Naive thymus-derived CD4-positive, alpha-beta T cell (primary cell): ENCODE measurements at regions of chr3 and their contacts with region 1.

Region 1: DNA sequence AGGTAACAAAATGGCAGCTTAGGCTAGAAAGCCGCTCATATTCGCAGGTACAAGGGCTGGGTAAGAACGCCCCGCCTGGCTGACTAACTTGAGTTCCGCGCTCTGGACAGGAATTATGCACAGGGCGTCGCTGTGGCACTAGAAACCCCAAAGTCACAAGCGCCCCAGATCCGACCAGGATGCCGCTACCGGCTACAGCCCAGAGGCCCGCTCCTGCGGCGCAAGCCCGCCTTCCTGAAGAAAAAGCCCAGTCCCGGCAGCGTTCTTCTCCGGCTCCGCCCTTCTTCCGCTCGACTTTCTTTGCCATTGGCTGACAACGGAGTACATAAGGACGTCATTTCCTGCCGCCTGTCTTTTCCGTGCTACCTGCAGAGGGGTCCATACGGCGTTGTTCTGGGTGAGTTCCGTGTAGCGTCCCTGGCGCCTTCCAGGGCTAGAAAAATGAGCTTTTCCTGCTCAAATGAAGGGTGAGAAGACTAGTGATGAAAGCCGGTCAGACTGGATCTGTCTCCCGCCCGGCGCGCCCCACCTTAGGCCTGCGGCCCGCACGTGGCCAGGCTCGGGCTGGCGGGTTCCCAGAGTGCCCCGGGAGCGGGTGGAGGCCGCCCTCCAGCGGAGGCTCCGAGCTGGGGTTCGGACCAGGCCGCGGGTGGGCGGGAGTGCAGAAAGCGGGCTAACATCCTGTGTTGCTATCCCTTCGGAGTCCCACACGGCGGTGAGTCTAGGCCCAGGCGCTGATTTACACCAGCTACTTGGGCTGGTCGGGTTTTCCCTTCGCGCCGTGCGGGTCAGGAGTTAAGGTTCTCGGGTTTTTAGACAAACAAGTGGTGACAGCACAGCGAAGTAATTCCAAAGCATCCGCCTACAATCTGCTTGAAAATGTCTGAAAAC is at the start of gene RPSA:
- DNase-seq: peak; percentile 80 to 99 (median 98)
- ATAC-seq: peak; percentile 96
- H3K4me3 ChIP-seq: peak within 1 kb of the TSS; percentile 62
- H3K4me3 Mint-ChIP-seq: peak within 1 kb of the TSS; percentile 88 to 97 (median 94)
- H3K27ac ChIP-seq: peak within 1 kb of the TSS; percentile 86
- H3K27ac Mint-ChIP-seq: peak within 1 kb of the TSS; percentile 88 to 98 (median 96)
- H3K4me1 ChIP-seq: peaks cover 30 to 37% of the 10 kb centered on the region in 2 donors
- H3K4me1 Mint-ChIP-seq: peaks cover 28 to 55% (median 51%) of the 10 kb centered on the region in 7 donors
- H3K27me3 ChIP-seq: no peaks in the 10 kb centered on the region
- H3K27me3 Mint-ChIP-seq: peaks cover 0 to 2% (median 0%) of the 10 kb centered on the region in 5 donors
- total RNA-seq, gene RPSA: 1,411 to 1,898 (median 1,693) TPM

Region 2: GRCh38 chr3:39086144-39086543 is 320.5 kb before region 1 on chr3:
- CTCF ChIA-PET with region 1: no interaction called
- POLR2A ChIA-PET with region 1: interaction called, 13 read pairs
- intact Hi-C with region 1: no loop called
- DNase-seq: no peak
- ATAC-seq: peak; percentile 37
- H3K4me3 ChIP-seq: no peak overlapping the region
- H3K4me3 Mint-ChIP-seq: no peak overlapping the region
- H3K27ac ChIP-seq: no peak overlapping the region
- H3K27ac Mint-ChIP-seq: peak overlapping the region in 3 of 9 donors; percentile 16 to 21 (median 21)
- H3K4me1 ChIP-seq: no peaks in the 10 kb centered on the region
- H3K4me1 Mint-ChIP-seq: peaks cover 0 to 7% (median 0%) of the 10 kb centered on the region in 7 donors
- H3K27me3 ChIP-seq: no peaks in the 10 kb centered on the region
- H3K27me3 Mint-ChIP-seq: no peaks in the 10 kb centered on the region

Region 3: DNA sequence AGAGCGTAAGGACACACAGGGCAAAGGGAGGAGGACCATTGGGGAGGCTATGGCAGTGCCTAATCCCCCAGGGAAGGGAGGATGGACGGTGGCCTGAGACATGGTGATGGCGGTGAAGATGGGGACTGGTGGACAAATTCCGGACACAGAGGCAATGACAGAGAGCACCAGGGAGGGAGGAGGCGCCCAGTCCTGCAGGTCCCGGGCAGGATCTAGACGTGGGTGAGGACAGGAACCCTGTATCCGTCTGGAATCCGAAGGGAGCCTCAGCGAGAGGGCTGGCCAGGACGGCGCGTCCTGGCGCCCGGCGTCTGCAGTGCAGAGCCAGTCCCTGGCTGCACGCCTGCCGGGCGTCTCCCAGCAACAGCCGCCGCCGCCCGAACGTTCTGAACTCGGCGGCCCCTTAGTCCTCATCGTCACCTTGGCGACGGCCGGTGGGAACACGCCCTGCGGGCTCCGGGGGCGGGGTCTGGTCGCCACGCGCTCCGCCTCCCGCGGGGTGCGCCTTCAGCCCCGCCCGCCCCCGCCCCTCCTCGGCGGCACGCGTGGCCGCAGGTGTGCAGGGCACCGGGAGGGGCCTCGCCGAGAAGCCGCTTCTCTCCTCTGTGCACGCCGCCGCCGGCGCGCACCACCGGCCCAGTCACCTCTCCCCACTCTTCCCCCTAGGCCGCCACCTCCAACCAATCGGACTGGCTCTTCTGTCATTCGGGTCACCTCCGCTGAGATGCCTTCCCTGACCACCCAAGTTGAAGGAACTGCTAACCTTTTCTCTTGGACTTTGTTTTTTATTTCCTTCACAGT is 225.9 kb before region 1 on chr3:
- CTCF ChIA-PET with region 1: no interaction called
- POLR2A ChIA-PET with region 1: no interaction called
- intact Hi-C with region 1: loop called in 1 of 2 experiments (anchors 1 kb)
- DNase-seq: peak; percentile 80 to 86 (median 83)
- ATAC-seq: peak; percentile 94
- H3K4me3 ChIP-seq: peak overlapping the region; percentile 74
- H3K4me3 Mint-ChIP-seq: peak overlapping the region; percentile 79 to 94 (median 87)
- H3K27ac ChIP-seq: peak overlapping the region; percentile 68
- H3K27ac Mint-ChIP-seq: peak overlapping the region; percentile 71 to 94 (median 88)
- H3K4me1 ChIP-seq: peaks cover 23 to 33% of the 10 kb centered on the region in 2 donors
- H3K4me1 Mint-ChIP-seq: peaks cover 24 to 51% (median 38%) of the 10 kb centered on the region in 7 donors
- H3K27me3 ChIP-seq: no peaks in the 10 kb centered on the region
- H3K27me3 Mint-ChIP-seq: no peaks in the 10 kb centered on the region

Region 4: GRCh38 chr3:39447637-39448483 is 41.2 kb after region 1 on chr3:
- CTCF ChIA-PET with region 1: interaction called, 5 read pairs
- POLR2A ChIA-PET with region 1: no interaction called
- intact Hi-C with region 1: loop called in 1 of 2 experiments (anchors 1 kb)
- DNase-seq: peak in 8 of 9 donors; percentile 37 to 65 (median 54)
- ATAC-seq: peak; percentile 87
- H3K4me3 ChIP-seq: no peak overlapping the region
- H3K4me3 Mint-ChIP-seq: peak overlapping the region in 1 of 10 donors; percentile 29
- H3K27ac ChIP-seq: no peak overlapping the region
- H3K27ac Mint-ChIP-seq: no peak overlapping the region
- H3K4me1 ChIP-seq: no peaks in the 10 kb centered on the region
- H3K4me1 Mint-ChIP-seq: peaks cover 0 to 5% (median 0%) of the 10 kb centered on the region in 7 donors
- H3K27me3 ChIP-seq: no peaks in the 10 kb centered on the region
- H3K27me3 Mint-ChIP-seq: peaks cover 0 to 21% (median 5%) of the 10 kb centered on the region in 5 donors

Region 5: GRCh38 chr3:40309418-40309924 is 902.9 kb after region 1 on chr3 and contains the start of gene EIF1B:
- CTCF ChIA-PET with region 1: no interaction called
- POLR2A ChIA-PET with region 1: interaction called, 4 read pairs
- intact Hi-C with region 1: loop called (anchors 1 kb)
- DNase-seq: peak; percentile 95 to 99 (median 98)
- ATAC-seq: peak; percentile 97
- H3K4me3 ChIP-seq: peak within 1 kb of the TSS; percentile 80
- H3K4me3 Mint-ChIP-seq: peak within 1 kb of the TSS; percentile 92 to 100 (median 99)
- H3K27ac ChIP-seq: peak within 1 kb of the TSS; percentile 99
- H3K27ac Mint-ChIP-seq: peak within 1 kb of the TSS; percentile 97 to 100 (median 99)
- H3K4me1 ChIP-seq: peaks cover 5 to 16% of the 10 kb centered on the region in 2 donors
- H3K4me1 Mint-ChIP-seq: peaks cover 5 to 44% (median 30%) of the 10 kb centered on the region in 7 donors
- H3K27me3 ChIP-seq: no peaks in the 10 kb centered on the region
- H3K27me3 Mint-ChIP-seq: no peaks in the 10 kb centered on the region
- total RNA-seq, gene EIF1B: 34.5 to 82.0 (median 53.3) TPM

Region 6: GRCh38 chr3:41198950-41199865 is 1792.6 kb after region 1 on chr3 and contains the start of gene CTNNB1:
- CTCF ChIA-PET with region 1: no interaction called
- POLR2A ChIA-PET with region 1: no interaction called
- intact Hi-C with region 1: loop called (anchors 2 to 5 kb)
- DNase-seq: peak; percentile 88 to 94 (median 92)
- ATAC-seq: peak; percentile 93
- H3K4me3 ChIP-seq: peak within 1 kb of the TSS; percentile 79
- H3K4me3 Mint-ChIP-seq: peak within 1 kb of the TSS; percentile 90 to 100 (median 95)
- H3K27ac ChIP-seq: peak within 1 kb of the TSS; percentile 97
- H3K27ac Mint-ChIP-seq: peak within 1 kb of the TSS; percentile 92 to 98 (median 96)
- H3K4me1 ChIP-seq: peaks cover 26 to 39% of the 10 kb centered on the region in 2 donors
- H3K4me1 Mint-ChIP-seq: peaks cover 31 to 43% (median 38%) of the 10 kb centered on the region in 7 donors
- H3K27me3 ChIP-seq: peaks cover 0 to 3% of the 10 kb centered on the region in 2 donors
- H3K27me3 Mint-ChIP-seq: peaks cover 0 to 29% (median 0%) of the 10 kb centered on the region in 5 donors
- total RNA-seq, gene CTNNB1: 118 to 227 (median 177) TPM